ENCODE measurements at regions of chr10 and their contacts with region 1.

Region 1: GRCh38 chr10:6416892-6417512 is 163.1 kb downstream of the PRKCQ start:
- DNase-seq: no peak
- ATAC-seq: peak; percentile 57 to 77 (median 73)
- H3K4me3 ChIP-seq: no peak overlapping the region
- H3K27ac ChIP-seq: no peak overlapping the region
- H3K4me1 ChIP-seq: no peaks in the 10 kb centered on the region
- H3K27me3 ChIP-seq: no peaks in the 10 kb centered on the region
- CTCF ChIP-seq: peak; percentile 72

Region 2: GRCh38 chr10:6163364-6164270 is 253.4 kb before region 1 on chr10:
- intact Hi-C with region 1: no loop called
- DNase-seq: peak; percentile 94 to 97
- ATAC-seq: peak; percentile 90 to 98 (median 94)
- H3K4me3 ChIP-seq: peak overlapping the region; percentile 73
- H3K27ac ChIP-seq: peak overlapping the region; percentile 92
- H3K4me1 ChIP-seq: peaks cover 37% of the 10 kb centered on the region
- H3K27me3 ChIP-seq: no peaks in the 10 kb centered on the region
- CTCF ChIP-seq: no peak

Region 3: GRCh38 chr10:6464862-6465430 is 47.9 kb after region 1 on chr10:
- intact Hi-C with region 1: loop called in 1 of 2 experiments (anchors 10 kb)
- DNase-seq: no peak
- ATAC-seq: no peak
- H3K4me3 ChIP-seq: no peak overlapping the region
- H3K27ac ChIP-seq: no peak overlapping the region
- H3K4me1 ChIP-seq: peaks cover 16% of the 10 kb centered on the region
- H3K27me3 ChIP-seq: no peaks in the 10 kb centered on the region
- CTCF ChIP-seq: no peak

Region 4: GRCh38 chr10:6667679-6668270 is 250.8 kb after region 1 on chr10:
- intact Hi-C with region 1: loop called (anchors 5 to 10 kb)
- DNase-seq: no peak
- ATAC-seq: peak; percentile 75 to 88 (median 80)
- H3K4me3 ChIP-seq: peak overlapping the region; percentile 8
- H3K27ac ChIP-seq: no peak overlapping the region
- H3K4me1 ChIP-seq: peaks cover 3% of the 10 kb centered on the region
- H3K27me3 ChIP-seq: no peaks in the 10 kb centered on the region
- CTCF ChIP-seq: peak; percentile 64